ENCODE measurements at regions of chr18 and their contacts with region 1.

Region 1: DNA sequence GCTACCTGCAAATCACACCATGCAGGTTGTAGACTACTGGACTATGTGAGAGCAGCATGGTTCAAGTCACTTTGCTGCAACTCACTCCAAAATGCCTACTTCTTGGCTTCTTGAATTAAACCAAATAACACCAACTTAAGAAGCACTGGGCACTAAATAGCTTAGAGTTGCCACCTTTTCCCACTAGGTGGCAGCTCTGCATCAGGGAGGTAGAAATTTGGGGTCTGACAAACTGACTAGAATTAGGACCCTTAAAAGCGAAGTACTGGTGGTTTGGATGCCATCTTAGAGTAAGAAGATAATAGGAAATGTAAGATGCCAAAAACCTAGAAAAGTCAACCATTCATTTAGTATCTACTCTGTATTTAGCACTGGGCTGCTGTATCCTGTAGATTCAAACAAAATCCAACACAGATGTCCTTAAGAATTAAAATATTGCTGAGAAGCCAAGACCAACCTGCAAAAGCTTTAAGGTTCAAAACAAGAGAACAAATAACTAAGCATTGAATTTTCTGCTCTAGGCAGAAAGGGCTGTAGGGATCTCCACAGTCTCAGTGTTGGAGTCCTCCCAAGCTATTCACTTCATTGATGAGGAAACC is 65.5 kb downstream of the CCBE1 start:
- DNase-seq: no peak
- H3K4me3 ChIP-seq: no peak overlapping the region
- H3K27ac ChIP-seq: peak overlapping the region in 3 of 4 donors; percentile 68 to 81 (median 79)
- H3K4me1 ChIP-seq: peaks cover 0 to 84% (median 56%) of the 10 kb centered on the region in 4 donors
- H3K27me3 ChIP-seq: no peaks in the 10 kb centered on the region
- CTCF ChIP-seq: peak; percentile 12 to 59 (median 52)
- EP300 ChIP-seq: no peak
- POLR2A ChIP-seq: no peak

Region 2: GRCh38 chr18:59502274-59503175 is 129.2 kb before region 1 on chr18:
- intact Hi-C with region 1: loop called (anchors 5 kb)
- DNase-seq: peak; percentile 86
- H3K4me3 ChIP-seq: no peak overlapping the region
- H3K27ac ChIP-seq: peak overlapping the region; percentile 44 to 84 (median 72)
- H3K4me1 ChIP-seq: peaks cover 0 to 65% (median 53%) of the 10 kb centered on the region in 4 donors
- H3K27me3 ChIP-seq: no peaks in the 10 kb centered on the region
- CTCF ChIP-seq: no peak
- EP300 ChIP-seq: peak in 2 of 4 donors; percentile 30 to 33
- POLR2A ChIP-seq: no peak

Region 3: DNA sequence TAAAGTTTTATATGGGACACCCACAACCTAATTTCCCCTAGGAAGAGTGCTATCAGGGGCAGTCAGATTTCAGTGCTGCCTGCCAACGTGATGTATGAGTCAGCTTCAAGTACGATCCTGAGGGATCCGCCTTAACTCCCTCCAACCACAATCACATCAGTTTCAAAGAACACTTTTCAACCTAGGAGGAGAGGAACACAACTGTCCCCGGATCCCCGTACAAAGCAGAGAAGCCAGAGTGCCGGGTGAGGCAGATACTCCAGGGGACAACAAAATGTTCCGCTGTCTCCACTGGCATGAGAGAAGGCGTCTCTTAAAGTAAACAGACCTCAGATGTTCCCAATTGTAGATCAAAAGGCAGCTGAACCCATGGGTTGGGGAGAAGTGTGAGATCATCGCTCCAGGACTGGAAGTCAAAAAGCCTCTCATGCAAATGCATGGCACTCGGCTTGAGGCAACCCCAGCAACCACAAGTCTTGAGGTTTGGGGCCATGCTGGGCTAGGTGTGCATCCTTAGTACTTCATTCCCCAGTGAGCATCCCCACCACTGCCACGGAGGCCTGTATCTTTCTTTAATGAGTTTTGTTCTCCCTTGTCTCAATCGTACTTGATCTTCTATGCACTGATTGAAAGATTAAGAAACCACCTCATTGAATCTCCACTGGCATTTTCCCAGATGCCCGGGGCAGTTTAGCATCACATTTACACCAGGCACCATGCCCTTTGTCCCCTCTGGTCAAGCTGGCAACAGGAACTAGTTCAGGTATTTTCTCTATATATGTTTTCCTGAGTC is 156.5 kb after region 1 on chr18:
- intact Hi-C with region 1: no loop called
- DNase-seq: no peak
- H3K4me3 ChIP-seq: no peak overlapping the region
- H3K27ac ChIP-seq: no peak overlapping the region
- H3K4me1 ChIP-seq: peaks cover 0 to 3% (median 0%) of the 10 kb centered on the region in 4 donors
- H3K27me3 ChIP-seq: no peaks in the 10 kb centered on the region
- CTCF ChIP-seq: no peak
- EP300 ChIP-seq: no peak
- POLR2A ChIP-seq: no peak

Measured in sigmoid colon (tissue), 7 donors.